Activated CD4-positive, alpha-beta T cell treated with anti-CD3 and anti-CD28 coated beads for 36 hours (primary cell): ENCODE measurements at regions of chr16 and their contacts with region 1.

Region 1: GRCh38 chr16:1812732-1813163 is 13.9 kb downstream of the HAGH start:
- DNase-seq: peak; percentile 85
- ATAC-seq: peak; percentile 96
- H3K4me3 Mint-ChIP-seq: no peak overlapping the region
- H3K27ac Mint-ChIP-seq: peak overlapping the region; percentile 65
- H3K4me1 Mint-ChIP-seq: peaks cover 10% of the 10 kb centered on the region
- H3K27me3 Mint-ChIP-seq: no peaks in the 10 kb centered on the region

Region 2: DNA sequence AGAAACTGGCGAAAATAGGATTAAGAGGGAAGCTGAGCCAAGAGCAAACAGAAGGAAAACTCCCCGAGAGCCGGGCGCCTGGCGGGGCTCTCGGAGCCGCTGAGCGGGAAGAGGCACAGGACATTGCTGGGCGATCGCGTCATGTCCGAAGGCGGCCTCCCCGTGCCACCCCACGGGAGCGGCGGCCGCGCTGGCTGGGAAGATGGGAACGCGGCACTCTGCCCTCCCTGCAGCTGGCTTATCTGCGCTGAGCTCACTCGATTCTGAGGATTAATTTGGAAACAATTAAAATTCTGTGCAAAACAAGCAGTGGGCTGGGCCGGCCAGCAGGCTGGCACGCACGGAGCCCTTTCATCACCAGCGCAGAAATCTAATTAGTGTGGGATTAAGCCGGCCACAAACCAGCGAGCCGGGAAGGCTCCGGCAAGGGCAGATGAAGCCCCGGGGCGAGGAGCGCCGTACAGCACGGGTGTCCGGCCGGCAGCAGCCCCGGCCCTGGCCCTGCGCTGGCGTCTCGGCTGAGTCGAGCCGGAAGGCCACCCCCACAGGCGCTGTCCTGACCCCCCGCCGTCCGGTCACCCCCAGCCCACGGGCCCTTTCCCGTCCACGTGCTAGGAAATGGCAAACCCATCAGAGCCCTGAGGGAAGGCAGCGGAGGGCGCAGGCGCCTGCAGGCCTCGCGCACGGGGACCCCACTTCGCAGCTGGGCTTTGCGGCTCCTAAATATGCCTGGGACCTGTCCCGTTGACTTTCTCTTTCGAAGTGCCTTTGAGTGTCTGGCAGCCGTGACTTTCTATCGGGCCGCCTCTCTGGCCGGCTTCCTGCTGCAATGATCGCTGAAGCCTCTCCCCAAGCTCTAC is 793.3 kb before region 1 on chr16:
- CTCF ChIA-PET with region 1: no interaction called
- POLR2A ChIA-PET with region 1: no interaction called
- intact Hi-C with region 1: loop called in 1 of 2 experiments (anchors 10 kb)
- DNase-seq: no peak
- ATAC-seq: no peak
- H3K4me3 Mint-ChIP-seq: no peak overlapping the region
- H3K27ac Mint-ChIP-seq: no peak overlapping the region
- H3K4me1 Mint-ChIP-seq: no peaks in the 10 kb centered on the region
- H3K27me3 Mint-ChIP-seq: no peaks in the 10 kb centered on the region